AG04449 (cell line): ENCODE measurements at regions of chr16 and their contacts with region 1.

Region 1: GRCh38 chr16:11396241-11397048 is 51.2 kb downstream of the RMI2 start:
- DNase-seq: no peak
- H3K4me3 ChIP-seq: no peak overlapping the region
- CTCF ChIP-seq: peak; percentile 98

Region 2: GRCh38 chr16:10957771-10958486 is 438.5 kb before region 1 on chr16:
- CTCF ChIA-PET with region 1: interaction called, 19 read pairs
- POLR2A ChIA-PET with region 1: no interaction called
- DNase-seq: no peak
- H3K4me3 ChIP-seq: no peak overlapping the region
- CTCF ChIP-seq: no peak

Region 3: DNA sequence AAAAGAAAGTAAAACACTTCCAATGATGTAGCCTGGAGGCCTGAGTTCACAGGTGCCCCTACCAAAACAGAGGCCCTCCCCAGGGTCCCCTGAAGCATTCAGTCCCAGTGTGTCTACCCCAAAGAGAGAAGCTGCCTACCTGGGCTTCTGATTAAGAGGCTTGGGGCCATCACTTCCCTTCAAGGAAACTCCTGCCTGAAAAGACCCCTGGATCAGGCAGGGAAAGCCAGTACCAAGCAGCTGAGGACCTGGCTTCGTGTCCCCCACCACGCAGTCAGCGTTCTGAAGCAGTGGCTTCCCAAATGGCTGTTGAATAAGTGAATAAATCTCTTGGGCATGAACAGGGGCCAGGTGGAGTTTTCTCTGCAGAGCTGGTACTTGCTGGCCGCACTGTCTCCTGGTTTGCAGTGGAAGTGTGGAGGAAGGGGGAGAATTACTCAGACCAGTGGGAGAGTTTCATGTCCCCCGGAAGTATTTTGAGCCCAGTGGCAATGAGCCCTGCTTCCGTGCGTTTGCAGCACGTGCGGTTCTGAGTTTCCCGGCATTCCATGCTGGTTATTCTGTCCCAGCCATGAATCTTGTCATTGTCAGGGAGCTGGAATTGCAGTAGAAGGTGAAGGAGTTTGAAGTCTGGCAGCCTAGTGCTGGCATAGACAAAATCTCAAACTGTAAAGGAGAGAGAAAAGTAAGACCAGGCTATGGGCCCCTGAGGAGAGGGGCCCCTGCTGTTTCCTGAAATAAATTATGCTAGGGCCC is 24.2 kb before region 1 on chr16:
- CTCF ChIA-PET with region 1: interaction called, 241 read pairs
- POLR2A ChIA-PET with region 1: no interaction called
- DNase-seq: no peak
- H3K4me3 ChIP-seq: no peak overlapping the region
- CTCF ChIP-seq: no peak

Region 4: DNA sequence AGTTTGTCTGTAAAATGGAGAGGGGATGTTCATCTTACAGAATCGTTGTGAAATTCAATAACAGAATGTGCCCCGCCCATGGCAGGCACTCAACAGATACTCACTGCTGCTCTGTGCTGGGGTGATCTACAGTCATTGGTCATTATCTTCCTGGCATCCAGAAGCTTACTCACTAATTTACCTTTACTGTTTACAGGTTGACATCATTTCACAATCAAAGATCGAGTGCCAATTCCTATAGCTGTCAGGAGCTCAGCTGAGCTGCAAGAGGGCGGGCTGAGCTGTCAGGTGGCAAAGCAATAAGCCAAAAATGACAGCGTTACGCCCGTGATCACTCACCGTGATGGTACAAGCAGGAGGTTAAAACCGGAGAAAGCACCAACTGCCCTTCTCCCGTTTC is 139.0 kb after region 1 on chr16:
- CTCF ChIA-PET with region 1: interaction called, 10 read pairs
- POLR2A ChIA-PET with region 1: no interaction called
- DNase-seq: no peak
- H3K4me3 ChIP-seq: no peak overlapping the region
- CTCF ChIP-seq: no peak

Region 5: DNA sequence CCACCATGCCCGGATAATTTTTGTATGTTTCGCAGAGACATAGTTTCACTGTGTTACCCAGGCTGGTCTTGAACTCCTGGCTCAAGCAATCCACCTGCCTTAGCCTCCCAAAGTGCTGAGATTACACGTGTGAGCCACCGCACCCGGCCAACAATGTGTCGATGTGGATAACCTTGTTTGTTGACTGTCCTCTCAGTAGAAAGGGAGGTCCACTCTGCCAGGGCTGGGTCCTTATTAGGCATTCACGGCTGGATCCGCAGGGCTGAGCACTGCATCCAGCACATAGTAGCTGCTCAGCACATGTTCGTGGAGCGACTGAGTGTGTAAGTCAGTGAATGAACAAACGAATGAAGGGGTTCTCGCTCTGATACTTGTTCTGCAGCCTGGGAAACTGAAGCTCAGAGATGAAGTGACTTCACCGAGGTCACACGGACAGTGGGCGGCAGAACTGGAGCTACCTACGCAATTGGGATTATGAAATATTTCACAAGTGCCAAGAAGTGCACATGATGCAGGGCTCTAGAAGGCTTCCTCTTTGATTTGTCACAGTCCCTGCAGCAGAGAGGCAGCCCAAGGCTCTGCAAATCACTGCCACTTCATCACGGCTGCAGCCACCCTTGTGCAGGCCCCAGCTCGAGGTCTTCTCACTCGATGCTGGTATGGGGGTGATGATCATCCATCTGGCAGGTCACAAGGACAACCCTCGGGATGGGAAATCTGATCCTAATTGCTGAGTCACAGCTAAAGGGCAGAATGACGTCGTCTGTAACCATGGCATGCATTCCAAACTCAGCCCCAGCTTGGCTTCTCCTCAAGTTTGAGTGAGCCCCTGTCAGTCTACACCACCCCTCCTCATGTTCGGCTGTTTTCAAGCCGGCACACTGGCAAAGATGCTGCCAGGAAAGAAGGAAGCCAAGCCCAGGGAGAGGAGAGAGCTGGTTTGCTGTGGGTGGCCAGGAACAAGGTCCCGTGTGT is 243.8 kb after region 1 on chr16:
- CTCF ChIA-PET with region 1: interaction called, 43 read pairs
- POLR2A ChIA-PET with region 1: no interaction called
- DNase-seq: peak; percentile 97
- H3K4me3 ChIP-seq: no peak overlapping the region
- CTCF ChIP-seq: no peak

Region 6: GRCh38 chr16:11706180-11706742 is 309.8 kb after region 1 on chr16:
- CTCF ChIA-PET with region 1: interaction called, 174 read pairs
- POLR2A ChIA-PET with region 1: no interaction called
- DNase-seq: no peak
- H3K4me3 ChIP-seq: no peak overlapping the region
- CTCF ChIP-seq: no peak

Region 7: GRCh38 chr16:11742539-11743307 is 346.3 kb after region 1 on chr16 and contains the start of gene TXNDC11:
- CTCF ChIA-PET with region 1: interaction called, 10 read pairs
- POLR2A ChIA-PET with region 1: no interaction called
- DNase-seq: peak; percentile 83
- H3K4me3 ChIP-seq: peak within 1 kb of the TSS; percentile 85
- CTCF ChIP-seq: no peak